AG04449 (cell line): ENCODE measurements at regions of chr20 and their contacts with region 1.

Region 1: DNA sequence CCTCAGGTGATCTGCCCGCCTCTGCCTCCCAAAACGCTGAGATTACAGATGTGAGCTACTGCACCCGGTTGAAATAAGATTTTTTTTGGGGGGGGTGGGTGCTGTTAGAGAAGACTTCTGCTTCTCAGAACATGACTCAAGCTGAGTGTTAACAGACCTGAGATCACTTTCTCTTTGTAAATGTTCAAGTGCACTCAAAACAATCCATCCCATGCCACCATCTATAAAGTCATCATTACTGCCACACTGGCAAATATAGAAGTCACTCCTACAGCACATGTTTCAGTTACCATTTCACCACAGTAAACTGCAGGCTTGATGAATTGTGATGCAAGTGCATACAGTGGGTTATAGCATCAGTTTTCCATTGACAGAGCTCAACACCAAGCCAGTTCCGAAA is 9.0 kb downstream of the VPS16 start:
- DNase-seq: no peak
- H3K4me3 ChIP-seq: no peak overlapping the region
- CTCF ChIP-seq: no peak

Region 2: DNA sequence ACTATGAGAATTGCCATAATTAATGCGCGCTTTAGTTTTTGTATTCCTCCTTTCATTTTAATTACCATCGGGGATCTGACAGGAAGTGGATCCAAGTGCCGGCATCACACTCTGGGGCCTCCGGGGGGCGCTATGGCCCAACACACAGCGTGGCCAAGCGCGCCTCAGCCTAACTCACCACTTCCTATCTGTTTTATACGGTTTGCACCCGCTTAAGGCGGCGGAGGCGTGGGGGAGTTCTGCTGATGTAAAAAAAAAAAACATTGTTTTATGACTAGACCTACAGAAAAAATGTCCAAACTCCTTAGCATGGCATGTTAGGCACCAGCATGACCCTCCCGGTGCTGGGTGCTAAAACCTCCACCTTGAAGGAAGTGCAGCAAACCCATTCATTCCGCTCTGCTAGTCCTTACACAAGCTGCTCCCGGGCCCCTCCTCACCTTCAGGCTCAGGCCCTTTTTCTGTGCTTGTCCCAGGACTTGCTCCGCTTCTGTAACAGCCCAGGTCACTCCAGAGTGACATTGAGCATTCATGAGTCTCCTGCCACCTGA is 161.4 kb before region 1 on chr20:
- CTCF ChIA-PET with region 1: interaction called, 38 read pairs
- POLR2A ChIA-PET with region 1: no interaction called
- DNase-seq: peak; percentile 3
- H3K4me3 ChIP-seq: no peak overlapping the region
- CTCF ChIP-seq: peak; percentile 78

Region 3: GRCh38 chr20:2834401-2835110 is 15.0 kb before region 1 on chr20:
- CTCF ChIA-PET with region 1: interaction called, 13 read pairs
- POLR2A ChIA-PET with region 1: interaction called, 3 read pairs
- DNase-seq: no peak
- H3K4me3 ChIP-seq: no peak overlapping the region
- CTCF ChIP-seq: no peak

Region 4: DNA sequence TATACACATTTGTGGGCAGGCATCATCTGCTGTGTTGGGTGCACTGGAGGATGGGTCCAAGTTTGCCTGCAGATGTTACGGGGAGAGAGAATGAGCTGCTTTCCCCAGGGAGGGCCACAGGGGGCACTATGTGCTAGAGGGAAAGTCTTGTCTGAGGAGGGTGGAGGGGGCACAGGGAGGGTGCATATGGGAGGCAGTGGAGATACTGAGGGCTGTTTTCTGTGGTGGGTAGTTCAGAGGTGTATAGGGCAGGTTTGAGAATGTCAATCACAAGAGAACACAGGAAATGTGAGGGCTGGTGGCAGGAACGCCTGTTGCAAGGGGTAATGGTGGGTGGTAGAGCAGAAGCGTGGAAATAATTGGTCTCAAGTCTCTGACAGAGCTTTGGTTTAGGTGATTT is 16.1 kb after region 1 on chr20:
- CTCF ChIA-PET with region 1: interaction called, 11 read pairs
- POLR2A ChIA-PET with region 1: no interaction called
- DNase-seq: no peak
- H3K4me3 ChIP-seq: no peak overlapping the region
- CTCF ChIP-seq: peak; percentile 2

Region 5: DNA sequence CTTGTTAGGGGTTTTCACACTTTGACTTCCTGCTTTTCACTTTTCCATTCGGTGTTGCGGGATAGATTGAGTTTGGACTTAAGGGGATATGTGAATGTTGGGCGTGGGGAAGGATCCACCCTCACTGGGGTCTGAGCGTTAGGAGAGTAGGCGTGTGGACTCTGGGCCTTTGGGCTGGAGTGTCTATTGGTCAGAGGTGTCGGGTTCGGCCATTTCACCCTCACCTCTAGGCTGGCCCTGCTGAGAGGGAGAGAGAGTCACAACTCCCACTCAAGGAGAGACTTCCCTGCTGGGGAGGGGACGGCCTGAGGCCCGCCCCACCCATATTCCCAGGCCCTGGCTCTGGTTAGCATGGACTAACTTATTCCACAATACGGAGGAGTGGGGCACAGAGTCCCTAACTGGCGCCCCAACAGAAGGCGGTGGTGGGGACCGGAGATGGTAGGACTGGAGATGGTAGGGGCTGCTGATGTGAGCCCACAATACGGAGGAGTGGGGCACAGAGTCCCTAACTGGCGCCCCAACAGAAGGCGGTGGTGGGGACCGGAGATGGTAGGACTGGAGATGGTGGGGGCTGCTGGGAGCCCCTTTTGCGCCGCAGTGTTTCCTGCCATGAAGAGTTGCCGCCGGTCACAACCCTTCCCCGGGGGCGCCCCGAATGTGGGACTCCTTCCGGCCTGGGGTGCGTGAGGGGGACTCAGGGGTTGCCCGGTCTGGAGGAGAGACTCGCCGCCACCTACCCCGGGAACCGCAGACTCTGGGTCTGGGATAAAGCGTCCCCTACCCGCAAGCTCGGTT is 22.3 kb after region 1 on chr20:
- CTCF ChIA-PET with region 1: interaction called, 11 read pairs
- POLR2A ChIA-PET with region 1: no interaction called
- DNase-seq: no peak
- H3K4me3 ChIP-seq: peak overlapping the region; percentile 75
- CTCF ChIP-seq: no peak

Region 6: DNA sequence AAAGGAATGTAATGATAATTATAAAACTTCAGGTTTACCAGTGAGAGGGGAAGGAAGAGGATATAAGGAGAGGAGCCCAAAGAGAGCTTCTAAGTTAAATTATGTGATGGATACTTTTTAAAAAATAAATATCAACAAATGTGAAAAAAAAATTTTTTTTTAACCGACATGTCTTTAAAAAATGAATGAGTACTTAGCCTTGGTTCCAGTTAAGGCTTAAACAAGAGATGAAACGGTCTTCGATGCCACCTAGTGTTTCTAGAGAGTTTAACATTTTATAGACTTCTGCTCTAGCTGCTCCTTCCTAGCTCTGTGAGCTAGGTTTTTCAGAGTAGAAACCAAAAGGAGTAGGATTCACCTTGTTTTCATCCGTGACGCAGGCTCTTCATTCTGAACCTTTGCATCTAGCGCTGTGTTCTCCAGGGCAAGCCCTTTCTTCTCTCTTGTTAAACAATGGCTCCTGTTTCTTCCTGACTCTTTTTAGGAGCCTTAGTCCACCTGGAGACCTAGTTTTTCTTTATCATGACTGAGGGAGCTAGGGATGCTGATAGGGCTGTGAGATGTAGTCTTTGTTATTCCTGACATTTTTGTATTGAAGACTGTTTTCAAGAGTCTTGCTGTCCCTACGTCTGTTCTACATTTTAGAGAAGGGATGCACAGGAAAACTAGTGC is 151.5 kb after region 1 on chr20:
- CTCF ChIA-PET with region 1: interaction called, 13 read pairs
- POLR2A ChIA-PET with region 1: no interaction called
- DNase-seq: peak; percentile 24
- H3K4me3 ChIP-seq: no peak overlapping the region
- CTCF ChIP-seq: peak; percentile 35